ENCODE measurements at regions of chr2 and their contacts with region 1.

Region 1: GRCh38 chr2:177629357-177630024 is 236.9 kb downstream of the AGPS start:
- DNase-seq: no peak

Region 2: DNA sequence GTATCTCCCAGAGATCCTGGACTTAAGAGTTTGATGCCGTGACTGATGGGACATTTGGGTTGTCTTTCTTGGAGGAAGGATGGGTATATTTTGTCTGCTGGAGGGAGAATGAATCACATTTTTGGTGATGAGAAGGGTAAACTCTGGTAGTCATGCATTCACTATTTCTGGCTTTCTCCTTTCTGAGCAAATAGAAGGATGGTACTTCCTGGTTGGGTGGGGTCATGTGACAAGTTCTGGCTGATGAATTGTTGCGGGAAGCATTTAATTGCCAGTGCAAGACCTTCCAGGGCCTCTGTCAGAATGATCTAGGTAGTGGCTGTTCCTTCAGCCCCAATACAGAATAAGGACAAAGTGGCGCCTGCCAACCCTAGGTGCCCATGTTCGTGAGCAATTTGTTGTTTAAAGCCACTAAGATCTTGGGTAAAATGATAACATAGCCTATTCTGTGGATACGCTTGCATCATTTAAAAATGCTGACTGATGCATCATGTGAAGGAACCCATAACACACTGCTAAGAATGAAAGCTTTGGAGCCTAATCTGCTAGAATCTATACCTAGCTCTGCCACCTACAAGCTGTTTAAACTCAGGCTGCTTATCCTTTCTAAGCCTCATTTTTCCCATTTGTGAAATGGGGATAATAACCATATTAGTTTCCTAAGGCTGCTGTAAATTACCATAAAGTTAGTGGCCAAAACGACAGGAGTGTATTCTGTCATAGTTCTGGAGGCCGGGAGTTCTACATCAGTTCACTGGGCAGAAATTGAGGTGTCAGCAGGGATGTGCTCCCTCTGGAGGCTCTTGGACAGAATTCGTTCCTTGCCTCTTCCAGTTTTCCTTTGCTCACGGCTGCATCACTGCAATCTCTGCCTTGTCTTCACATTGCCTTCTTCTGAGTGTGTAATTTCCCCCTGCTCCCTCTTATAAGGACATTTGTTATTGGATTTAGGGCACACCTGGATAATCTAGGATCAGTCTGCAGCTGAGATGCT is 44.4 kb after region 1 on chr2:
- intact Hi-C with region 1: loop called (anchors 5 kb)
- DNase-seq: no peak

Region 3: DNA sequence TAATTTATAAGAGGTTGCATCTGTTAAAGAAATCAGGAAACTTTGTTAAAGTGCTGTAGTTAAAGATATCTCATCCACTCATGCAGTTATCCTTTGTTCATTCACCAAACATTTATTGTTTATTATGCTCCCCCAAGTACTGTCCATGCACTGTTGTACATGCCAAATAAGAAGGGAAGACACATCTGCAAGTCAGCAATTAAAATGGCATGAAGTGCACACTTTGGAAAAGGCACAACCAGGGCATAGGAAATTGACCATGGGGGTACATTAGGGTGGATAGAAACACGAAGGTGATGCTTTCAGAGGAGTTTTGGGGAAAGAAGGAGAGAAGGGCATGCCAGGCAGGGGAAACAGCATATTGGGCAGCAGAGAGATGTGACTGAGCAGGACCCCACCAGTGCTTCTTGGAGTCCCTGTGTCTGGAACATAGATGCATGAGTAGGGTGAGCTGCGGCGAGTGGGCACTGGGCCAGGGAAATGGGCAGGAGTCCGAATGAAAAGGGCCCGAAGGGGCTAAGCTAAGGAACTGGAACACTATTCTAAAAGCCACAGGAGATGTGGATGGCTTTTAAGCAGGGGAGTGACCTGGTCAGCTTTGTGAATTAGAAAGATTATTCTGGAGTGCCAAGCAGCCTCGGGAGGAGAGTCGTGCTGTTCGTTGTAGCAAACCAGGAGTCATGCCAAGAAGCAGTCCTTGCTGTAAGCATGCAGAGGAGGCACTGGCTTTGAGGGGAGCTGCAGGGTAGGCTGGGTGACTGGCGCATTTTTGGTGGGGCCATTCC is 79.4 kb after region 1 on chr2:
- intact Hi-C with region 1: no loop called
- DNase-seq: no peak